PC-9 (cell line): ENCODE measurements at regions of chr2 and their contacts with region 1.

Region 1: DNA sequence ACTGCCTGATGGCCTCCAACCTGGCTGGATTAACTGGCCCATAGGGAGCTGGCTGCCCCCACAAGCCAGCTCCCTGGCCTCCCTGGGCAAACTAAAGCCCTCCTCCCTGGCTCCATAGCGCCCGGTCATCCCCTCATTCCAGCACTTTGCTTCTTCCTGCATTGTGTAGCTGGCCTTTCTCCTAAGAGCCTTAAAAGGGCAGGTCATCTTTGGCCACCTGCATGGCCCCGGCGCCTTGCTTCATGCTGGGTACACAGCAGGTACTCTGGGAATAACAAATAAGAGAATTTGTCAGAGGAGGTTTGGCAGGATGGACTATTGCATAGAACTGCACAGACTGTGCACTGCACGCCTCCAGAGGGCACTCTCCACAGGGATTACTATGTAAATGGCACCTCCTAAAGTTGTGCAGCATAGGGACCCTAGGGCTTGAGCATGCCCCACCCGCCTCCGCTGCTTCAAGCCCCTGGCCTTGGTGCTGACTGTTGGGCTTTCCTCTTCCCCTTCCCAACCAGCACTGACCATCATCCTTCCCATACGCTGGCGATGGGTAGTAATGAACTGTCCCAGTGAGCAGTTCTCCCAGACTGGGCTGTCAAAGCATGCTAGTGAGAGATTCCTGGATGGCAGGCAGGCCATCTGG is 10.9 kb downstream of the STEAP3 start:
- DNase-seq: no peak
- H3K4me3 ChIP-seq: no peak overlapping the region
- H3K27ac ChIP-seq: no peak overlapping the region
- H3K4me1 ChIP-seq: peaks cover 53% of the 10 kb centered on the region
- H3K27me3 ChIP-seq: no peaks in the 10 kb centered on the region
- CTCF ChIP-seq: peak; percentile 41; the same call in 1 of the 2 replicates

Region 2: GRCh38 chr2:118661179-118661578 is 573.3 kb before region 1 on chr2:
- CTCF ChIA-PET with region 1: no interaction called
- POLR2A ChIA-PET with region 1: no interaction called
- intact Hi-C with region 1: no loop called
- DNase-seq: no peak
- H3K4me3 ChIP-seq: no peak overlapping the region
- H3K27ac ChIP-seq: no peak overlapping the region
- H3K4me1 ChIP-seq: no peaks in the 10 kb centered on the region
- H3K27me3 ChIP-seq: no peaks in the 10 kb centered on the region
- CTCF ChIP-seq: no peak

Region 3: DNA sequence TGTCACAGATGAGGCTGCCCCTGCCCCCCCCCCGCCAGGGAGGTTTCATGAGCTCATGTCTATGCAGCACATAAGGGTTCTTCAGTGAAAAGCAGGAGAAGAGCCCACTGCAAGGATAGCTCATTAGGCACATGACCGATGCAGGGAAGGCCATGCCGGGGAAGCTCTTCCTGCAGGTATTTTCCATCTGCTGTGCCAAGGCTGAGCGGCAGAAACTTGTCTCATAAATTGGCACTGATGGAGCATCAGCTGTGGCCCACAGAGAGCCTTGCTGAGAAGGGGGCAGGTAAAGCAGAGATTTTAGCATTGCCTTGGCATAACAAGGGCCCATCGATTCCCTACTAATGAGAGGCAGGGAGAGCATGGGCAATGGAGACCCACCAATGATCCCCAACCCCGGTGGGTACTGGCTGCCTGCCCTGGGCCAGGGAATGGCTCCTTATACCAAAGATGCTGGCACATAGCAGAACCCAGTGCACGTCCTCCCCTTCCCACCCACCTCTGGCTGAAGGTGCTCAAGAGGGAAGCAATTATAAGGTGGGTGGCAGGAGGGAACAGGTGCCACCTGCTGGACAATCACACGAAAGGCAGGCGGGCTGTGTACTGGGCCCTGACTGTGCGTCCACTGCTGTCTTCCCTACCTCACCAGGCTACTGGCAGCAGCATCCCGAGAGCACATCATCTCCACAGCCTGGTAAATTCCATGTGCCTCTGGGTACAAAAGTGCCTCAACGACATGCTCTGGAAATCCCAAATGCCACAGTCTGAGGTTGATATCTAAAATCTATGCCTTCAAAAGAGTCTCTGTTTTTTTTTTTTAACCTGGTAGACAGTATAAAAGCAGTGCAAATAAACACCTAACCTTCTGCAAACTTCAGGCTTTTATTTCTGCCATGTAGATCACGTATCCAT is 30.5 kb after region 1 on chr2:
- CTCF ChIA-PET with region 1: no interaction called
- POLR2A ChIA-PET with region 1: no interaction called
- intact Hi-C with region 1: loop called (anchors 1 kb)
- DNase-seq: peak in 1 of 2 experiments; percentile 67
- H3K4me3 ChIP-seq: no peak overlapping the region
- H3K27ac ChIP-seq: no peak overlapping the region
- H3K4me1 ChIP-seq: no peaks in the 10 kb centered on the region
- H3K27me3 ChIP-seq: no peaks in the 10 kb centered on the region
- CTCF ChIP-seq: peak; percentile 95

Region 4: GRCh38 chr2:119276864-119277263 is 42.4 kb after region 1 on chr2:
- CTCF ChIA-PET with region 1: no interaction called
- POLR2A ChIA-PET with region 1: no interaction called
- intact Hi-C with region 1: no loop called
- DNase-seq: no peak
- H3K4me3 ChIP-seq: no peak overlapping the region
- H3K27ac ChIP-seq: no peak overlapping the region
- H3K4me1 ChIP-seq: no peaks in the 10 kb centered on the region
- H3K27me3 ChIP-seq: no peaks in the 10 kb centered on the region
- CTCF ChIP-seq: no peak

Region 5: GRCh38 chr2:119518413-119519408 is 284.2 kb after region 1 on chr2:
- CTCF ChIA-PET with region 1: interaction called, 13 read pairs
- POLR2A ChIA-PET with region 1: no interaction called
- intact Hi-C with region 1: no loop called
- DNase-seq: no peak
- H3K4me3 ChIP-seq: no peak overlapping the region
- H3K27ac ChIP-seq: no peak overlapping the region
- H3K4me1 ChIP-seq: no peaks in the 10 kb centered on the region
- H3K27me3 ChIP-seq: peaks cover 33% of the 10 kb centered on the region; the same call in 1 of the 2 replicates
- CTCF ChIP-seq: no peak